ENCODE measurements at regions of chr2 and their contacts with region 1.

Region 1: DNA sequence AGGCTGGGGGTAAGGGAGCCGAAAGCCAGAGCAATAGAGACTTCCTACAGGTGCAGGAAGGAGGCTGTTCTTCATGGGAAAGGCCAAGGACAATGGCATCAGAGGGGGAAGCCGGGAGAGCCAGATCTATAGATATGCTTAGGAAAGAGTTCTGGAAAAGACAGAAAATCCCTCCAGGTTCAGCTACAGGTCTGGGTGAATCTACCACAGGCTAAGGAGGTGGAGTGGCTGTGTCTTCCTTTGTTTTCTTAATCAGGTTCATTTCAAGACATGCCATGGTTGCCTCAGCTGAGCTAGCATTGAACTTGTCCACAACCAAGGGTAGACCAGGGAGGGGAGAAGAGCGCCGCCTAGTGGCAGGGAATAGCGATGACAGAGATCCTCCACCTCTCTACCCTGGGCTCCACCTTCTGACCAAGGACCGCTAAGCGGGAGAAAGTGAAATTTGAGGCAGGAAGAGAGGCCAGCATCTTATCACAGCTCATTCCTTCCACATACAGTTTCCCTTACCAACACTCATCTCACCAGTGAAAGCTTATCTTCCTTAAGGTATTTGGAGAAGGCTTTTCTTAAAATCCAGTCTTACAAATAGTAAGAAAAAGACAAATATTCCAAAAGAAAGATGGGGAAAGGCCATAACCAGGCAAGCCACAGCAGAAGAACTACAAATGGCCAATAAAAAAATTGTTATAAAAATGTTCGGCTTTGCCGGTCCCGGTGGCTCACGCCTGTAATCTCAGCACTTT is 74.2 kb downstream of the VIT start:
- DNase-seq: peak in 1 of 2 donors; percentile 48
- H3K4me3 ChIP-seq: no peak overlapping the region
- CTCF ChIP-seq: no peak
- POLR2A ChIP-seq: no peak

Region 2: GRCh38 chr2:38254796-38255195 is 1484.1 kb after region 1 on chr2:
- intact Hi-C with region 1: loop called (anchors 5 kb)
- DNase-seq: no peak
- H3K4me3 ChIP-seq: no peak overlapping the region
- CTCF ChIP-seq: no peak
- POLR2A ChIP-seq: no peak